Activated CD4-positive, alpha-beta memory T cell treated with anti-CD3 and anti-CD28 coated beads for 36 hours (primary cell): ENCODE measurements at regions of chr22 and their contacts with region 1.

Region 1: DNA sequence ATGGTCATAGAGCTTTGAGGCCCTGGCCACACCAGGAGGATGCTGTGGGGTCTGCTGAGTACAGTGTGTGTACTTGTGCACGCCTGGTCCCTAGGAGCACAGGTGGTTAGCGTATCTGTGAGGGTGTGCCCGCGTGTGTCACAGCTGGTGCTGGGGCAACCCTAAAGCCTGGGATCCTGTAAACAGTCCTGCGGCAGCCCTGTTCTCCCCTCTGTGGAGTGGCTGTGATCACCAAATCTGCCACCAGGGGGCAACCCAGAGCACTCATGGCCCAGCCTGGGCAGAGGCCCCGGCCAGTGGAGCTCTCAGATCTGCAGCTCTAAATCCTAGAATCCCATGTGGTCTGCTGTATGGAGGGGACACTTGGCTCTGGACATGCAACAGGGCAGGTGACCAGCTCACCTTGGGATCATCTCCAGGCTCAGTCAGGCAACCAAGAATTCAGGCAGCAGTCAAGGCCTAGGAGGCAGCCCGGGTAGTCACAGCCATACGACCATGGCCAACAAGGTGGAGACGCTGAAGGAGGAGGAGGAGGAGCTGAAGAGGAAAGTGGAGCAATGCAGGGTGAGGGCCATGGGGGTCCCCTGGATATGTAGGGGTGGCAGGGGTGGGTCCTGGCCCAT is 3.9 kb downstream of the SH3BP1 start:
- DNase-seq: peak; percentile 91
- H3K4me3 Mint-ChIP-seq: peak overlapping the region; percentile 29
- H3K27ac Mint-ChIP-seq: peak overlapping the region; percentile 76
- H3K4me1 Mint-ChIP-seq: peaks cover 32% of the 10 kb centered on the region
- H3K27me3 Mint-ChIP-seq: no peaks in the 10 kb centered on the region

Region 2: DNA sequence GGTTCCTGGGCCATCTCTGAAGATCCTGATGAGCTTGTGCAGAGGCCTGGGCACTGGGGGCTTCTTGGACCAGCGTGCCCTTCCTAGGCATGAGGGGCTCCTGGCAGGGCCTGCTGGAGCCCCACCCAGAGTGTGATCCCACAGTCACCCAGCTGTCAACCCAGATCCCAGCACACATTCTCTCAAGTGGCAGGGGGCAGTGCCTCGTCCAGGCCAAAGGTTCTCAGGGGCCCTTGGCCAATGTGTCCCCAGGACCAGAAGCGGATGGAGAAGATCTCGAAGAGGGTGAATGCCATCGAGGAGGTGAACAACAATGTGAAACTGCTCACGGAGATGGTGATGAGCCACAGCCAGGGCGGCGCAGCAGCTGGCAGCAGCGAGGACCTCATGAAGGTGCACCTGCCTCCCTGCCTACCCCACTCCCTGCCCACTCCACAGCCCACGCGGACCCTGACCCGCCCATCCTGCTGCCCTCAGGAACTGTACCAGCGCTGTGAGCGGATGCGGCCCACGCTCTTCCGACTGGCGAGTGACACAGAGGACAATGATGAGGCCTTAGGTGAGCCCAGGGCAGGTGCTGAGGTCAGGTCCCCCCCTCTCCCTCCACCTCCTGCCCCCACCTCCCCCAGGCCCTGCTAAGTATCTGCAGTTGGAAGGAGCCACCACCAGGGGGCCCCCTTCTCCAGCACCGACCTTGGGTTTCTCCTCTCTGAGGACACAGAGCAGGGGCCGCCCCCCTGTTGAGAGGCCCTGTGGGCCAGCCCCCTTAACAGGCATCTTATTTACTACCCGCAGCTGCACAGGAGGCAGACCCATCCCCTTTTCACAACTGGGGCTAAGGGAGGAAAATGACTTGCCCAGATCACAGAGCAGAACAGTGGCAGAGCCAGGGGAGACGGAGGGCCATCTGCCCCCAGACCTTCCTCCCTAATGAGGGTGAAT is 20.0 kb before region 1 on chr22:
- CTCF ChIA-PET with region 1: interaction called, 81 read pairs
- POLR2A ChIA-PET with region 1: interaction called, 6 read pairs
- intact Hi-C with region 1: no loop called
- DNase-seq: peak; percentile 87
- H3K4me3 Mint-ChIP-seq: no peak overlapping the region
- H3K27ac Mint-ChIP-seq: peak overlapping the region; percentile 87
- H3K4me1 Mint-ChIP-seq: peaks cover 43% of the 10 kb centered on the region
- H3K27me3 Mint-ChIP-seq: no peaks in the 10 kb centered on the region

Region 3: GRCh38 chr22:37658133-37659065 is 15.1 kb after region 1 on chr22 and contains the start of gene PDXP:
- CTCF ChIA-PET with region 1: interaction called, 184 read pairs
- POLR2A ChIA-PET with region 1: interaction called, 30 read pairs
- intact Hi-C with region 1: loop called (anchors 2 kb)
- DNase-seq: peak; percentile 98
- H3K4me3 Mint-ChIP-seq: peak within 1 kb of the TSS; percentile 87
- H3K27ac Mint-ChIP-seq: peak within 1 kb of the TSS; percentile 72
- H3K4me1 Mint-ChIP-seq: peaks cover 31% of the 10 kb centered on the region
- H3K27me3 Mint-ChIP-seq: no peaks in the 10 kb centered on the region
- total RNA-seq, gene PDXP: 21.9 to 22.9 TPM

Region 4: GRCh38 chr22:37716708-37717107 is 73.4 kb after region 1 on chr22:
- CTCF ChIA-PET with region 1: no interaction called
- POLR2A ChIA-PET with region 1: no interaction called
- intact Hi-C with region 1: no loop called
- DNase-seq: no peak
- H3K4me3 Mint-ChIP-seq: no peak overlapping the region
- H3K27ac Mint-ChIP-seq: no peak overlapping the region
- H3K4me1 Mint-ChIP-seq: peaks cover 2% of the 10 kb centered on the region
- H3K27me3 Mint-ChIP-seq: no peaks in the 10 kb centered on the region